ENCODE measurements at regions of chr2 and their contacts with region 1.

Region 1: GRCh38 chr2:72579591-72580180 is 246.1 kb downstream of the EXOC6B start:
- DNase-seq: no peak
- H3K4me3 ChIP-seq: no peak overlapping the region
- H3K27ac ChIP-seq: no peak overlapping the region
- H3K4me1 ChIP-seq: peaks cover 0 to 22% (median 18%) of the 10 kb centered on the region in 4 donors
- H3K27me3 ChIP-seq: no peaks in the 10 kb centered on the region
- CTCF ChIP-seq: peak; percentile 66 to 67 (median 66)
- EP300 ChIP-seq: no peak
- POLR2A ChIP-seq: no peak

Region 2: DNA sequence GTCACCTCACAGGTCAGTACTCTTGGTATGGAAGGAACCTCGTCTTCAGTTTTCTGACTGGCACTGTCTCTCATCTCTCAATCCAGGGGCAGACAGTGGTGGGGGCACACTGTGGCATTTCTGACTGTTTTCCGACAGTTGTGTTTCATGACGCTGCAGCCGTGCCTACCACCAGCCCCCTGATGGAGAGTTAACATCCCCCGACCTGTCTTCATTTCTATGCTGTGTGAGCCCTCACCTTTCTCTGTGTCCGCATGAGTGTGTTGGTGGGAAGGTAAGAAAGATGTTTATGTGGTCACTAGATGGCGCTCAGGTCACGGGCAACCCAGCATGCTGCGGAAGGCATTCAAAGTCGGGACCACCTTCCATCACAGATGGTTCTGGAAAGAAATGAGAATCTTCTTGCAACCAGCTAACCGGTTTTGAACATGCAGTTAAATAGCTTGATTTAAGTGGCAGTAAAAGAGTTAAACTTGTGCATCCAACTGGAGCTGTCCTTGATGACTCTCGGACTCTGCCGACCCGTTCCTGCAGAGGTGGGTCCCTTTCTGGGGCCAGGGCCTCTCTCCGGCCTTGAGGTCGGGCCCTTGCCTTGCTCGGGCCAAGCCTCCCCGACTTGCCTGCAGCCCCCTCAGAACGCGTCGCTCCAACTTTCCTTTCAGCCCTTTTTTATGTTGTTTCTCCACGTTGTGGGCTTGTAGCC is 1034.0 kb before region 1 on chr2:
- intact Hi-C with region 1: loop called (anchors 10 kb)
- DNase-seq: no peak
- H3K4me3 ChIP-seq: peak overlapping the region in 2 of 4 donors; percentile 23 to 32
- H3K27ac ChIP-seq: peak overlapping the region in 3 of 4 donors; percentile 26 to 55 (median 50)
- H3K4me1 ChIP-seq: peaks cover 3 to 13% (median 10%) of the 10 kb centered on the region in 4 donors
- H3K27me3 ChIP-seq: no peaks in the 10 kb centered on the region
- CTCF ChIP-seq: peak; percentile 55 to 67 (median 57)
- EP300 ChIP-seq: no peak
- POLR2A ChIP-seq: no peak

Region 3: DNA sequence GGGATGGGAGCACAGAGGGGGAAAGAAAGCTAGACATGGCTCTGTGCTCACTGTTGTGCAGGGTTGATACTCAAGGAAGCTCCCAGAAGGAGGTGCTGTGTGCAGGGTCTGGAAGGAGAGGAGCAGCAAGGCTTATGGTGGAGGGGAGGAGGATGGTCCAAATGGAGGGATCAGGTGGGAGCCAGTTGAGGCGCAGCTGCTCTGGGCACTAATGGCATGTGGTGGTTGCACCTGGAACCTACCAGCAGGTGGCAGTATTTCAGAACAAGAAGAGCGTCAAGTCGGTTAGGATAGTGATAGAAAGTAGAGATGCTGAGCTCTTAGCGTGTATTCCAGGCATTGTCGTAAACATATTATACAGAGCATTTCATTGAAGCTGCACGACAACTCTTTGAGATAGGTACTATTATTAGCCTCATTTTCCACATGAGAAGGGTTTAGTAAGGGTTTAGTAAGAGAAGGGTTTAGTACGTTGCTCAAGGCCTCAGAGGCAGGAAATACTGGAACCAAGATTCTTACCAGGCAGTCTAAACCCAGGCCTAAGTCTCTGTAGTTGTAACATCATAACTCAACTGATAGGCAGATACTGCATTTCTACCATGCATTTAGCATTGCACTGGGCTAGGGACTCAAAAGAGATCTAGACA is 655.7 kb before region 1 on chr2:
- intact Hi-C with region 1: loop called (anchors 5 kb)
- DNase-seq: peak; percentile 92
- H3K4me3 ChIP-seq: no peak overlapping the region
- H3K27ac ChIP-seq: no peak overlapping the region
- H3K4me1 ChIP-seq: no peaks in the 10 kb centered on the region
- H3K27me3 ChIP-seq: no peaks in the 10 kb centered on the region
- CTCF ChIP-seq: peak; percentile 67 to 86 (median 80)
- EP300 ChIP-seq: no peak
- POLR2A ChIP-seq: no peak

Region 4: DNA sequence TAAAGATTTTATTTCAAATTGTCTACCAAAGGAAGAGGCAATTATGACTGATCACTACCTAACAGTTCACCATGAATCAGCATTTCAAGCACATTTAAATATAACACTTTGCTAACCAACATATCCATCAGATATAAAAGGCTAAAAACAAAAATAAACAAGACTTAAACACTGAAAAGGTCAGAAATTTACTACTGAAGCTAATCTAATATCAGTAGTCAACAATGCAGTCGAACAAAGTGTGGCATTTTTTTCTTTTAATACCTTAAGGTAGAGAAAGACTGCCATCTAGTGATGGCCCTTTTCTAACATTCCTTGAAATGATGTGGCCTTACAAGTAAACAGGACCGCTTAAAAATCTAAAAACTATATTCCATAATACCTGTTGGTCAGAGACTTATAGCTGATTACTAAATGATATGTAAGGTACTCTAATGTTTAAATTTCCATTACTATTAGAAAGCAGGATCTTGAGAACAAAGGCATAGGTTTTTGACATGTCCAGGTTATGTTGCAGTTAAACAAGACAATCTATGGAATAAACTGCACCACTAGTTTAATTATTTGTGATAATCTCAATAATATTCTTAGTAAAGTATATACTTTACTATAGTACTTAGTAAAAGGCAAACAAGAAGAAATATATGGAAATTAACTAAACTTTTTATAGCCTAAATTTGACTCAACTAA is 166.1 kb after region 1 on chr2:
- intact Hi-C with region 1: loop called (anchors 10 kb)
- DNase-seq: no peak
- H3K4me3 ChIP-seq: no peak overlapping the region
- H3K27ac ChIP-seq: no peak overlapping the region
- H3K4me1 ChIP-seq: peaks cover 0 to 10% (median 3%) of the 10 kb centered on the region in 4 donors
- H3K27me3 ChIP-seq: no peaks in the 10 kb centered on the region
- CTCF ChIP-seq: peak; percentile 64 to 67 (median 65)
- EP300 ChIP-seq: no peak
- POLR2A ChIP-seq: no peak